HepG2 (cell line): ENCODE measurements at regions of chr2 and their contacts with region 1.

Region 1: GRCh38 chr2:47334356-47335136 is 68.4 kb upstream of the MSH2 start:
- DNase-seq: no peak
- ATAC-seq: no peak
- H3K4me3 ChIP-seq: no peak overlapping the region
- H3K27ac ChIP-seq: no peak overlapping the region
- H3K4me1 ChIP-seq: peaks cover 19% of the 10 kb centered on the region
- H3K27me3 ChIP-seq: no peaks in the 10 kb centered on the region
- CTCF ChIP-seq: no peak
- EP300 ChIP-seq: no peak
- POLR2A ChIP-seq: no peak
- RAD21 ChIP-seq: no peak

Region 2: GRCh38 chr2:47360927-47361326 is 26.4 kb after region 1 on chr2:
- CTCF ChIA-PET with region 1: no interaction called
- POLR2A ChIA-PET with region 1: no interaction called
- in situ Hi-C with region 1: no loop called
- intact Hi-C with region 1: no loop called
- DNase-seq: peak; percentile 76
- ATAC-seq: peak; percentile 84
- H3K4me3 ChIP-seq: no peak overlapping the region
- H3K27ac ChIP-seq: no peak overlapping the region
- H3K4me1 ChIP-seq: peaks cover 51% of the 10 kb centered on the region
- H3K27me3 ChIP-seq: no peaks in the 10 kb centered on the region
- CTCF ChIP-seq: no peak
- EP300 ChIP-seq: peak in 1 of 2 experiments; percentile 25; a peak in 1 of 4 replicates
- POLR2A ChIP-seq: no peak
- RAD21 ChIP-seq: no peak

Region 3: DNA sequence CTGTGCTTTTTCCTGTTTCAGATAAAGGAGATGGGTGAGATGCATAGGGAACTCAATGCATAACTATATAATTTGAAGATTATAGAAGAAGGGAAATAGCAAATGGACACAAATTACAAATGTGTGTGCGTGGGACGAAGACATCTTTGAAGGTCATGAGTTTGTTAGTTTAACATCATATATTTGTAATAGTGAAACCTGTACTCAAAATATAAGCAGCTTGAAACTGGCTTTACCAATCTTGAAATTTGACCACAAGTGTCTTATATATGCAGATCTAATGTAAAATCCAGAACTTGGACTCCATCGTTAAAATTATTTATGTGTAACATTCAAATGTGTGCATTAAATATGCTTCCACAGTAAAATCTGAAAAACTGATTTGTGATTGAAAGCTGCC is 52.0 kb after region 1 on chr2:
- CTCF ChIA-PET with region 1: interaction called, 73 read pairs
- POLR2A ChIA-PET with region 1: interaction called, 66 read pairs
- in situ Hi-C with region 1: loop called (anchors 5 kb)
- intact Hi-C with region 1: loop called (anchors 1 kb)
- DNase-seq: no peak
- ATAC-seq: no peak
- H3K4me3 ChIP-seq: no peak overlapping the region
- H3K27ac ChIP-seq: no peak overlapping the region
- H3K4me1 ChIP-seq: peaks cover 10% of the 10 kb centered on the region
- H3K27me3 ChIP-seq: no peaks in the 10 kb centered on the region
- CTCF ChIP-seq: no peak
- EP300 ChIP-seq: no peak
- POLR2A ChIP-seq: no peak
- RAD21 ChIP-seq: no peak